ENCODE measurements at regions of chr11 and their contacts with region 1.

Region 1: GRCh38 chr11:38315141-38315540 is 1717.1 kb upstream of the RAG2 start:
- DNase-seq: no peak
- H3K4me3 ChIP-seq: no peak overlapping the region
- H3K27ac ChIP-seq: no peak overlapping the region
- H3K4me1 ChIP-seq: no peaks in the 10 kb centered on the region
- H3K27me3 ChIP-seq: no peaks in the 10 kb centered on the region
- CTCF ChIP-seq: no peak

Region 2: GRCh38 chr11:38089726-38090125 is 225.4 kb before region 1 on chr11:
- intact Hi-C with region 1: no loop called
- DNase-seq: no peak
- H3K4me3 ChIP-seq: no peak overlapping the region
- H3K27ac ChIP-seq: no peak overlapping the region
- H3K4me1 ChIP-seq: peaks cover 0 to 5% (median 0%) of the 10 kb centered on the region in 4 donors
- H3K27me3 ChIP-seq: no peaks in the 10 kb centered on the region
- CTCF ChIP-seq: no peak

Region 3: GRCh38 chr11:38206663-38207062 is 108.5 kb before region 1 on chr11:
- intact Hi-C with region 1: no loop called
- DNase-seq: no peak
- H3K4me3 ChIP-seq: no peak overlapping the region
- H3K27ac ChIP-seq: no peak overlapping the region
- H3K4me1 ChIP-seq: no peaks in the 10 kb centered on the region
- H3K27me3 ChIP-seq: no peaks in the 10 kb centered on the region
- CTCF ChIP-seq: no peak

Region 4: DNA sequence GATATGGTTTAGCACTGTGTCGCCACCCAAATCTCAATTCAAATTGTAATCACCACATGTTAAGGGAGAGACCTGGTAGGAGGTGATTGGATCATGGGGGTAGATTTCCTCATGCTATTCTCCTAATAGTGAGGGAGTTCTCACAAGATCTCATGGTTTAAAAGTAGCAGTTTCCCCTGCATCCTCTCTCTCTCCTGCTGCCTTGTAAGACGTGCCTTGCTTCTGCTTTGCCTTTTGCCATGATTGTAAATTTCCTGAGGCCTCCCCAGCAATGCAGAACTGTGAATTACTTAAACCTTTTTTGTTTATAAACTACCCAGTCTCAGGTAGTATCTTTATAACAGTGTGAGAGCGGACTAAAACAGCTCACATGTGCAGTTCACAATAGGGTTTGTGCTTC is 48.5 kb before region 1 on chr11:
- intact Hi-C with region 1: loop called (anchors 10 kb)
- DNase-seq: no peak
- H3K4me3 ChIP-seq: no peak overlapping the region
- H3K27ac ChIP-seq: no peak overlapping the region
- H3K4me1 ChIP-seq: no peaks in the 10 kb centered on the region
- H3K27me3 ChIP-seq: no peaks in the 10 kb centered on the region
- CTCF ChIP-seq: no peak

Region 5: DNA sequence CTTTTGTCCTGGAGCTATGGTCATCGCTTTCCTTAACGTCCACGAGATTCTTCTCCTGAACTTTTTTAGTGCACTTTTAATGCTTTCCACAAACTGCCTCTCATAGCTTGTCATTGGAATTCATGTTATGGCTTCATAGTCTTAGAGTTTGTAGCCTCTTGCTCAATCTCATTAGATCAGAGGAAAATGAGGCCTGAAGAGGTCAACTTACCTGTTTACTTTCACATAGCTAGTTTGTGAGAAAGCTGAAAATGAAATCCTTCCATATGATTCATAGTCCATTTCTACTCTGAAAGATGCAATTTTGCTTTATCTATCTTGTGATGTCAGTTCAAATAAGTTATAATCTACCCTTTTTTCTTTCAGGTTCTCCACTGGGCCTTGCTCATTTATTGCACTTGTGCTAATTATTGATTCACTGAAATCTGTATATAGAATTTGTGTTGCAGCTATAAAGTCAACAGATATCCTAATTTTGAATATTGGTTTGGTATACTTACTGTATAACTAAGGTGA is 30.2 kb after region 1 on chr11:
- intact Hi-C with region 1: loop called (anchors 2 kb)
- DNase-seq: no peak
- H3K4me3 ChIP-seq: no peak overlapping the region
- H3K27ac ChIP-seq: no peak overlapping the region
- H3K4me1 ChIP-seq: no peaks in the 10 kb centered on the region
- H3K27me3 ChIP-seq: no peaks in the 10 kb centered on the region
- CTCF ChIP-seq: no peak

Region 6: GRCh38 chr11:38577769-38578168 is 262.6 kb after region 1 on chr11:
- intact Hi-C with region 1: no loop called
- DNase-seq: no peak
- H3K4me3 ChIP-seq: no peak overlapping the region
- H3K27ac ChIP-seq: no peak overlapping the region
- H3K4me1 ChIP-seq: no peaks in the 10 kb centered on the region
- H3K27me3 ChIP-seq: no peaks in the 10 kb centered on the region
- CTCF ChIP-seq: no peak

Measured in tibial artery (tissue), 4 donors.